Activated CD4-positive, alpha-beta memory T cell treated with anti-CD3 and anti-CD28 coated beads for 36 hours (primary cell): ENCODE measurements at regions of chr15 and their contacts with region 1.

Region 1: DNA sequence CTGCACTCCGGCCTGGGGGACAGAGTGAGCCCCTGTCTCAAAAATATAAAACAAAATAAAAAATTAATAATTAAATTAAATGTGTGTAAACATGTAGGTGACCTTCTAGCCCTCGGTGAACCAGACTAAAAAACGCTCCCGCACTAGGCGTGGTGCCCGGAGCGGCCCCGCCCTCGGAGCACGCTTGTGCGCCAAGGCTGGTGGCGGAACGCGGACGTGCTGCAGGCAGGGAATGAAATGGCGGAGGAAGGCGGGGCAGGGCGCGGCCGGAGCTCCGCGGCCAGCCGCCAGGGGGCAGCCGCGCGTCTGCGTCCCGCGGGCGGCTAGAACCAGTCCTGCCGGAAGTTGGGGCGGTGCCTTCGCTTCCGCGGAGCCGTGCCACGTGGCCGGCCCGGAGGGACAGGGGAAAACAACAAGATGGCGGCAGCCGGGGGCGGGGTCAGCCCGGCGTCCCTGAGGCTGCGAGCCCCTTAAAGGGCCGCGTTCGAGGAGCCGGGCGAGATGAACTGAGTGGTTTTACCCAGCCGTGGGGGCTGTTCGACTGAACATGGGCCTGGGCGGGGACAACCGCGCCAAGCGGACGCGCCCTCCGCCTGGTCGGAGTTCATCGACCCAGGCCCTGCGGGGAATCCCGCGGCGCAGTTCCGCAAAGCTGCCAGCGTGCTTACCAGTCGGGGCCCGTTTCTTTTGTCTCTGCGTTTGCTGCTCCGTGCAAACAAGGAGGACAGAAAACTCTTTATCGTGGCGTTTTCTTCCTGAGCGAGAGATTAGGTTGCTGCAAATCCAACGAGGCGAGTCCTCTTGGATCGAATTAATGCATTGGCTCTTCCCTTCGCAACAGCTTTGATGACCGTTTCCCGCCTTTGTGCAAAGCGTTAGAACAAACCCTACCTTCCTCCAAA is 90.9 kb upstream of the CHD2 start:
- DNase-seq: peak; percentile 99
- H3K4me3 Mint-ChIP-seq: peak overlapping the region; percentile 95
- H3K27ac Mint-ChIP-seq: peak overlapping the region; percentile 99
- H3K4me1 Mint-ChIP-seq: peaks cover 43% of the 10 kb centered on the region
- H3K27me3 Mint-ChIP-seq: no peaks in the 10 kb centered on the region

Region 2: GRCh38 chr15:92831655-92832328 is 22.6 kb after region 1 on chr15:
- CTCF ChIA-PET with region 1: interaction called, 12 read pairs
- POLR2A ChIA-PET with region 1: interaction called, 94 read pairs
- intact Hi-C with region 1: loop called (anchors 1 kb)
- DNase-seq: peak; percentile 95
- H3K4me3 Mint-ChIP-seq: peak overlapping the region; percentile 70
- H3K27ac Mint-ChIP-seq: peak overlapping the region; percentile 99
- H3K4me1 Mint-ChIP-seq: peaks cover 52% of the 10 kb centered on the region
- H3K27me3 Mint-ChIP-seq: peaks cover 2% of the 10 kb centered on the region

Region 3: GRCh38 chr15:92881802-92882696 is 72.8 kb after region 1 on chr15:
- CTCF ChIA-PET with region 1: interaction called, 79 read pairs
- POLR2A ChIA-PET with region 1: interaction called, 295 read pairs
- intact Hi-C with region 1: loop called (anchors 1 kb)
- DNase-seq: peak; percentile 99
- H3K4me3 Mint-ChIP-seq: peak overlapping the region; percentile 96
- H3K27ac Mint-ChIP-seq: peak overlapping the region; percentile 97
- H3K4me1 Mint-ChIP-seq: peaks cover 43% of the 10 kb centered on the region
- H3K27me3 Mint-ChIP-seq: no peaks in the 10 kb centered on the region

Region 4: GRCh38 chr15:92896561-92896960 is 87.3 kb after region 1 on chr15:
- CTCF ChIA-PET with region 1: interaction called, 30 read pairs
- POLR2A ChIA-PET with region 1: interaction called, 240 read pairs
- intact Hi-C with region 1: loop called (anchors 1 kb)
- DNase-seq: no peak
- H3K4me3 Mint-ChIP-seq: peak overlapping the region; percentile 18
- H3K27ac Mint-ChIP-seq: peak overlapping the region; percentile 62
- H3K4me1 Mint-ChIP-seq: peaks cover 69% of the 10 kb centered on the region
- H3K27me3 Mint-ChIP-seq: no peaks in the 10 kb centered on the region

Region 5: DNA sequence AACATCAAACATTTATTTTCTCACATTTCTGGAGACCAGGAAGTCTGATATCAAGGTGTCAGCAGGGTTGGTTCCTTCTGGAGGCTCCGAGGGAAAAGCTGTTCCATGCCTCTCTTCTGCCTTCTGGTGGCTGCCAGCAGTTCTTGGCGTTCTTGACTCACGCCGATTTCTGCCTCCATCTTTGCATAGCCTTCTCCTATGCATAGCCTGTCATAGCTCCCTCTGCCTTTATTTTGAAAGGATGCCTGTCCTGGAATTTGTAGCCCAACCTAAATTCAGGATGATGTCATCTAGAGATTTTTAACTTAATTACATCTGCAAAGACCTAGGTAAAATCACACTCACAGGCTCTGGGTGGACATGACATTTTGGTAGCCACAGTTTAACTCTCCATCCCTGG is 209.4 kb after region 1 on chr15:
- CTCF ChIA-PET with region 1: interaction called, 4 read pairs
- POLR2A ChIA-PET with region 1: interaction called, 4 read pairs
- intact Hi-C with region 1: loop called (anchors 2 kb)
- DNase-seq: no peak
- H3K4me3 Mint-ChIP-seq: no peak overlapping the region
- H3K27ac Mint-ChIP-seq: peak overlapping the region; percentile 83
- H3K4me1 Mint-ChIP-seq: peaks cover 68% of the 10 kb centered on the region
- H3K27me3 Mint-ChIP-seq: no peaks in the 10 kb centered on the region